PC-9 (cell line): ENCODE measurements at regions of chr9 and their contacts with region 1.

Region 1: GRCh38 chr9:122827761-122828093 is 661 bp downstream of the PDCL start:
- DNase-seq: no peak
- H3K4me3 ChIP-seq: peak overlapping the region; percentile 61
- H3K27ac ChIP-seq: peak overlapping the region; percentile 64
- H3K4me1 ChIP-seq: peaks cover 14% of the 10 kb centered on the region
- H3K27me3 ChIP-seq: no peaks in the 10 kb centered on the region
- CTCF ChIP-seq: no peak

Region 2: GRCh38 chr9:121088576-121088975 is 1739.2 kb before region 1 on chr9:
- CTCF ChIA-PET with region 1: no interaction called
- POLR2A ChIA-PET with region 1: no interaction called
- intact Hi-C with region 1: no loop called
- DNase-seq: no peak
- H3K4me3 ChIP-seq: no peak overlapping the region
- H3K27ac ChIP-seq: no peak overlapping the region
- H3K4me1 ChIP-seq: no peaks in the 10 kb centered on the region
- H3K27me3 ChIP-seq: no peaks in the 10 kb centered on the region
- CTCF ChIP-seq: no peak

Region 3: GRCh38 chr9:122904823-122905710 is 77.3 kb after region 1 on chr9 and contains the start of gene RC3H2:
- CTCF ChIA-PET with region 1: no interaction called
- POLR2A ChIA-PET with region 1: interaction called, 3 read pairs
- intact Hi-C with region 1: loop called (anchors 1 kb)
- DNase-seq: peak; percentile 98 to 99
- H3K4me3 ChIP-seq: peak within 1 kb of the TSS; percentile 100
- H3K27ac ChIP-seq: peak within 1 kb of the TSS; percentile 80
- H3K4me1 ChIP-seq: peaks cover 19% of the 10 kb centered on the region
- H3K27me3 ChIP-seq: no peaks in the 10 kb centered on the region
- CTCF ChIP-seq: no peak
- total RNA-seq, gene RC3H2: 58.8 and 59.3 TPM in 2 replicates